ENCODE measurements at regions of chr6 and their contacts with region 1.

Region 1: DNA sequence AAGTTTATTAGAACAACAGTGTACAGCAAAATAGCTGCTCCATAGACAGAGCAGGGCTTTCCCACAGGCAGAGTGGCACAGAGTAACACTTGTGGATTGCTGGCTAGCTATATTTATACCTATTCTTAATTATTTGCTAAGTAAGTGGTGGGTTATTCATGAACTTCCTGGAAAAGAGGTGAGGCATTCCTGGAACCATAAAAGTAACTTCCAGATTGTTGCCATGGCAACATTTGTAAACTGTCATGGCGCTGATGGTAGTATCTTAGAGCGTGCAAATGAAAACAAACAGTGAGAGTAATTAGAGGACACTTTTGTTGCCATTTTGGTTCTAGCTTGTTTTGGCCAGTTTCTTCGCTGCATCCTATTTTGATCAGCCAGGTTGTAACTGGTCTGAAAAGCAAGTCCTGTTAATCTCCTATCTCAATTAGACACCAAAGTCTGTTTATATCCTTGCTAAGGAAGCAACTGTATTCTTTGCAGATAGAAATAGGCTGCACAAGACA is 23.9 kb downstream of the DEFB114 start:
- DNase-seq: no peak
- ATAC-seq: no peak
- H3K4me3 ChIP-seq: no peak overlapping the region
- H3K27ac ChIP-seq: no peak overlapping the region
- H3K4me1 ChIP-seq: no peaks in the 10 kb centered on the region
- H3K27me3 ChIP-seq: no peaks in the 10 kb centered on the region
- CTCF ChIP-seq: no peak
- POLR2A ChIP-seq: no peak
- RAD21 ChIP-seq: no peak

Region 2: GRCh38 chr6:49087369-49087768 is 852.7 kb before region 1 on chr6:
- CTCF ChIA-PET with region 1: no interaction called
- POLR2A ChIA-PET with region 1: no interaction called
- dilution Hi-C with region 1: no loop called
- in situ Hi-C with region 1: no loop called
- intact Hi-C with region 1: no loop called
- DNase-seq: no peak
- ATAC-seq: no peak
- H3K4me3 ChIP-seq: no peak overlapping the region
- H3K27ac ChIP-seq: no peak overlapping the region
- H3K4me1 ChIP-seq: no peaks in the 10 kb centered on the region
- H3K27me3 ChIP-seq: no peaks in the 10 kb centered on the region; the same call in 1 of the 2 replicates
- CTCF ChIP-seq: no peak
- POLR2A ChIP-seq: no peak
- RAD21 ChIP-seq: no peak

Region 3: GRCh38 chr6:49980898-49981297 is 40.9 kb after region 1 on chr6:
- CTCF ChIA-PET with region 1: no interaction called
- POLR2A ChIA-PET with region 1: interaction called, 11 read pairs
- dilution Hi-C with region 1: no loop called
- in situ Hi-C with region 1: no loop called
- intact Hi-C with region 1: no loop called
- DNase-seq: peak; percentile 0
- ATAC-seq: no peak
- H3K4me3 ChIP-seq: no peak overlapping the region
- H3K27ac ChIP-seq: no peak overlapping the region
- H3K4me1 ChIP-seq: no peaks in the 10 kb centered on the region
- H3K27me3 ChIP-seq: no peaks in the 10 kb centered on the region
- CTCF ChIP-seq: no peak
- POLR2A ChIP-seq: no peak
- RAD21 ChIP-seq: no peak

Region 4: DNA sequence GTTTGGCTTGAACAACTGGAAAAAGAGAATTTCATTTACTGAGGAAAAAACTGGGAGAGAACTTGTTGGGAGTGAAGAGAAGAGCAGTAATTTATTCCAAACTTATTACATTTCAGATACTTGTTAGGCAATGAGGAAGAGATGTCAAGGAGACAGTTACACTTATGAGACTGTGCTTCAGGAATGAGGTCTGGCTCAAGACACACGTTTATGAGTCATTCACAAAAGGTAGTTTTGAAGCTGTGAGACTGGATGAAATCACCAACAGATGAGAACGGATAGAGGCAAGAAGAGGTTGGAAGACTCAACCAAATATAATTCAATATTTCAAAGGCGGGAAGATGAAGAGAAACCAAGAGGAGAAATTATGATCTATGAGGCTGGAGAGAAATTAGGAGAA is 180.3 kb after region 1 on chr6:
- CTCF ChIA-PET with region 1: no interaction called
- POLR2A ChIA-PET with region 1: no interaction called
- dilution Hi-C with region 1: no loop called
- in situ Hi-C with region 1: no loop called
- intact Hi-C with region 1: no loop called
- DNase-seq: no peak
- ATAC-seq: no peak
- H3K4me3 ChIP-seq: no peak overlapping the region
- H3K27ac ChIP-seq: no peak overlapping the region
- H3K4me1 ChIP-seq: no peaks in the 10 kb centered on the region
- H3K27me3 ChIP-seq: no peaks in the 10 kb centered on the region
- CTCF ChIP-seq: no peak
- POLR2A ChIP-seq: no peak
- RAD21 ChIP-seq: no peak